Esophagus muscularis mucosa (tissue), 4 donors: ENCODE measurements at regions of chr5 and their contacts with region 1.

Region 1: DNA sequence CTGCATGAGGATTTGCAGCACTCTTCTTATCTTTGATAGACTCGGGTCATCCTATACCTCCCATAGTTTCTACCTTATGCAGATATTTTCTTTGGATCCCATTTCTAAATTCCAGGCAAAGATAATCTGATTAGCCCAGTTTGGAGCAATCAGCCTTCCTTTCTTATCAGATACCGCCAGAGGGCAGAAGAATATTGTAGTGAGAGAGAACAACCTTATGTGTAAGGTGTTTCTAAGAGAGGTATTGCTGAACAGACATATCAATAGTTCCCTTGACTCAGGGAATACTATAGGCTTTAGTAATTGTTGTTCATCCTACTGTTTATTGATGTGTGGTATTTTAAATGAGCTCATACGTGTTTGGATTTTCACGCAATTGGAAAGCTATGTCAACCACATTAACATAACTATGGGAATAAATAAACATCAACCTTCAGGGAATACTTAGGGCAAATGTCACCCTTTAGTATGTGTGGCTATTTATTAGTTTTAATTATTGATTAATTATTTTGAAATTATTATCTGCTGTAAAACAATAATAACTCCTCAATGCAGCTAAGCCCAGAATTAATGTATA is 1435.2 kb upstream of the CDH9 start:
- DNase-seq: no peak
- H3K4me3 ChIP-seq: no peak overlapping the region
- H3K27ac ChIP-seq: no peak overlapping the region
- H3K4me1 ChIP-seq: no peaks in the 10 kb centered on the region
- H3K27me3 ChIP-seq: no peaks in the 10 kb centered on the region
- CTCF ChIP-seq: peak; percentile 16 to 31 (median 18)
- EP300 ChIP-seq: no peak
- POLR2A ChIP-seq: no peak

Region 2: GRCh38 chr5:28766565-28767158 is 293.0 kb after region 1 on chr5:
- intact Hi-C with region 1: loop called (anchors 5 kb)
- DNase-seq: no peak
- H3K4me3 ChIP-seq: no peak overlapping the region
- H3K27ac ChIP-seq: no peak overlapping the region
- H3K4me1 ChIP-seq: no peaks in the 10 kb centered on the region
- H3K27me3 ChIP-seq: no peaks in the 10 kb centered on the region
- CTCF ChIP-seq: peak; percentile 39 to 42 (median 39)
- EP300 ChIP-seq: no peak
- POLR2A ChIP-seq: no peak